Lower lobe of right lung (tissue), 2 donors: ENCODE measurements at regions of chr14 and their contacts with region 1.

Region 1: DNA sequence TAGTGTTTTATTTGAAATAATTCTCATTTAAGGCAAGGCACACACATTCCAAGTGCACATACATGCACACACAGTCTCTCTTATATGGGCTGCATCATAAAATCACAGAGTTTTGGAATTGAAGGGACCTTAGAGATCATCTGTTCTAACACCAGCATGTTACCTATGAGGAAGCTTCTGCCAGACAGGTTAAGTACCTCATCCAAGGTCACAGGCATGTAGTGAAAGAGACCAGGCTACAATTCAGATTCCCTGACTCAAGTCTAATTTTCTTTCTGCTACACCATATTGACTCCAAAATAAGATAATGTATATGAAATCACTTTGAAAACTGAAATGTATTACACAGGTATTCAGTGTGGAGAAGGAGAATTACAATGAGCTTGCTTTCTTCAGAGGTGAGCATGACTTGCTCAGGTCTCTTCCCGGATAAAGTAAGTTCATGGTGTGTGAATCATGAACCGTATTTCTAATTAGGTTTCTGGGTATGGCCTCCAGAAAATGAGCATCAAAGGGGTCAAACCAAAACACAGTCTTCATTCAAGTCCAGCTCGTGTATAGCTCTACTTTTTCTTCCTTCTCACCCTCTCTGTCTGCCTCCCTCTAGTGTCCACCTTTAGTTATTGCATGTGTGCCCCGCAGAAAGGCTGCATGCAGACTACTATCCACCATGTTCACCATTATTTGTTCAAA is 411.9 kb downstream of the FUT8 start:
- DNase-seq: no peak
- ATAC-seq: peak; percentile 83 to 85
- H3K4me3 ChIP-seq: no peak overlapping the region
- H3K27ac ChIP-seq: no peak overlapping the region
- H3K4me1 ChIP-seq: no peaks in the 10 kb centered on the region
- H3K27me3 ChIP-seq: no peaks in the 10 kb centered on the region
- CTCF ChIP-seq: peak; percentile 93

Region 2: DNA sequence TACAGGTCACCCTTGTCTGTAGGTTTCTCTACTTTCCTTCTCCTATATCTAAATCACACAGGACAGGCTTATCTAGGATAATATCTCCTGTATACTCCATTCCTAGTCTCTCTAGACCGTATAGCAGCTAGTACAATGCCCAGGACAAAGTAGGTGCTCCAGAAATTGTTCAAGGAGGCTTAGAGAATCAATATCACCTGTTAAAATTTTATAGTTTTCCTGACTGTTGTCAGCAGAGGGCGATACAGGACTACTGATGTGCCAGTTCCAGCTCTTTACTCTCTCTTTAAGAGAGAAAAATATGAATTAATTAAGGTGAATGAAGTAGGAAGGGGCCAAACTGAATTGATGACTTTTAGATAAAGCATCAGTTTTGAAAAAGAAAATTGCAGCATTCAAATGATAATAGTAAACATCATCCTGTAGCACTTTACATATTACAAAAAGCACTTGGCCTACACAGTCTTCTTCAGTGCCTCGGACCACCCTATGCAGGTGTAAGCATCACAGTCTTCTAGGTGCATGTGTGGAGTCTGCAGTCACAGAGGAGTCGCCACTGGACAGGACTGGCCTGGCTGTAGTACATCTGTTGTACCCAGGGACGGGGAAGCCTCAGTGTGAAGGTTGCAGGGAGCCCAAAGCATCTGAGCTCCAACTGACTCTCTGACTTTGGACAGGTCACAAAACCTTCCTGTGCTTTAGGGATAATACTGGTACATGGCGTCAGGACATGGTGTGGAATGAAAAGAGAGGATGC is 660.2 kb before region 1 on chr14:
- intact Hi-C with region 1: loop called (anchors 10 kb)
- DNase-seq: no peak
- ATAC-seq: peak; percentile 74 to 78
- H3K4me3 ChIP-seq: no peak overlapping the region
- H3K27ac ChIP-seq: no peak overlapping the region
- H3K4me1 ChIP-seq: no peaks in the 10 kb centered on the region
- H3K27me3 ChIP-seq: no peaks in the 10 kb centered on the region
- CTCF ChIP-seq: peak; percentile 71

Region 3: DNA sequence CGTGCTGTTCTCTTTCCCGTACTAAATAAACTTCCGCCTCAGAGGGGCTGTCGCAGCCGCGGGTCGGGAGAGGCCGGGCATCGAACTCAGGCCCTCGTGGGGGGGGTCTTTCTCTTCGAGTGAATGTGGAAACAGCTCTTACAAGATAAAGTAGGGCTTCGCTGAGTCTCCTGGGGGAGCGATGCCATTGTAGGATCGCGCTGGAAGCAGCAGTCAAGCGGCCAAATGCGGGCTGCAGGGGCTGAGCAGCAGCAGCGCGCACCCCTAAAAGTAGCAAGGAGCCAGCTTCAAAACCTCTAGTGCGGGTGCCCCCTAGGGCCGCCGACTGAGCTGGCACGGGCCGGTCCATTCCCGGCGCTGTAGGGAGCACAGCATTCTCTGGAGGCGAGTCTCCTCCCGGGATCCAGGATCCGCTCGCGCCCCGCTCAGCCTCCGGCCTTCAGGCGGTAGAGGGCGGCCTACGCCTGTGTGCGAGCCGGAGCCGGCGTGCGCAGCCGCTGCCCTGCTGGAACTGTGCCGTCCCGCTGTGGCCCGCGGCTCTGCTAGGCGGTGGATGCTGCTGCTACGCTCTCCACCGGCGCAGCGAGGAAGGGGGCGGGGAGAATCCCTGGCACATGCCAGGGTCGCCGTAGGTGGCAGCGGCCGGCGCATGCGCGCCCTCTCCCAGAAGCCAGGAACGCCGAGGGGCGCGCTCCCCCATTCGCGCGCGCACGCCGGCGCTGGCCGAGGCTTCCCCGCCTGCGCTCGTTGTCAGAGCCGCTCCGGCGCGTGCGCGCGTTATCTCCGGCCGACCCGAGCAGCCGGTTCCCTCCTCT is 412.2 kb before region 1 on chr14 and contains the start of gene FUT8:
- intact Hi-C with region 1: loop called (anchors 10 kb)
- DNase-seq: peak; percentile 97
- ATAC-seq: peak; percentile 96 to 97
- H3K4me3 ChIP-seq: peak within 1 kb of the TSS; percentile 87
- H3K27ac ChIP-seq: peak within 1 kb of the TSS; percentile 95
- H3K4me1 ChIP-seq: peaks cover 22% of the 10 kb centered on the region
- H3K27me3 ChIP-seq: no peaks in the 10 kb centered on the region
- CTCF ChIP-seq: peak; percentile 70
- total RNA-seq, gene FUT8: 46.1 TPM